Dorsolateral prefrontal cortex (tissue), 120 donors: ENCODE measurements at regions of chr22 and their contacts with region 1.

Region 1: GRCh38 chr22:49632199-49633009 is 195.3 kb downstream of the BRD1 start:
- DNase-seq: peak; percentile 57 to 86 (median 68)
- H3K4me3 ChIP-seq: peak overlapping the region; percentile 31 to 75 (median 58)
- H3K27ac ChIP-seq: peak overlapping the region in 42 of 59 donors; percentile 4 to 88 (median 49)
- H3K27me3 ChIP-seq: no peaks in the 10 kb centered on the region
- CTCF ChIP-seq: peak; percentile 72 to 99 (median 93)

Region 2: DNA sequence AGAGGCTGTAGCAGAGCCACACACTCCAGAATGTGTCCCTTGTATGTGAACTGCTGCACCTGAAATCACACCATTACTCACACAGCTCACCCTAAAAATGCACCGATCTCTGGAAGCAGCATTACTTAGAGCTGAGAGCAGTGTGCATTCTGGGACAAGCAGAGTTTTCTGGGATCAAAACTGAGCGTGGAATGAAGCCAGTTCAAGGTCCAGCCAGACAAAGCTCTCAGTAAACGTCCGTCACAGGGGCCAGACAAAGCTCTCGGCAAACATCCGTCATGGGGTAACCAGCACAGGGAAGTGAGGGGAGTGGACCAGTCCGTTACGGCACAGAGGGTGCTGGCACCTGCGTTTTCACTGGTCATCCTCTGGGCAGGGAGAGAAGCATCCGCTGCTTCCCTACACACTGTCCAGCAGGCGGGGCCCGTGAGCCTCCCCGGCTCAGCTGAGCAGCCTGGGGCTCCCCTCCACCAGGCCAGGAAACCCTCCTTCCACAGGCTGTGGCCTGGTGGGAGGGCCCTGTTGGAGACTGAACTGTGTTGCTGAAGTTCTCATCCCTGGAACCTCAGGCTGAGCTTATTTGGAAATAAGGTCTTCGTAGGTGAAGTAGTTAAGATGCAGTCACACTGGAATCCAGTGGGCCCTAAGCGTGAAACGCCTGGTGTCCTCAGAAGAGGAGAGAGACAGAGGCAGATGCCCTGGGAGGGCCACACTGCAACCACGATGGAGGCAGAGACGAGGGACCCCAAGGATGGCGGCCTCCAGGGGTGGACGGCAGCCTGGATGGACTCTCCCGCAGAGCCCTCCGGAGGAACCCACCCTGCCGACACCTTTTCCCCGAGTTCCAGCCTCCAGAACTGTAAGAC is 688.6 kb before region 1 on chr22:
- intact Hi-C with region 1: loop called in 1 of 2 experiments (anchors 10 kb)
- DNase-seq: peak in 8 of 10 donors; percentile 49 to 76 (median 60)
- H3K4me3 ChIP-seq: peak overlapping the region in 4 of 59 donors; percentile 18 to 29 (median 20)
- H3K27ac ChIP-seq: peak overlapping the region in 58 of 59 donors; percentile 10 to 90 (median 78)
- H3K27me3 ChIP-seq: peaks cover 0 to 5% (median 0%) of the 10 kb centered on the region in 45 donors
- CTCF ChIP-seq: peak; percentile 40 to 87 (median 72)

Region 3: DNA sequence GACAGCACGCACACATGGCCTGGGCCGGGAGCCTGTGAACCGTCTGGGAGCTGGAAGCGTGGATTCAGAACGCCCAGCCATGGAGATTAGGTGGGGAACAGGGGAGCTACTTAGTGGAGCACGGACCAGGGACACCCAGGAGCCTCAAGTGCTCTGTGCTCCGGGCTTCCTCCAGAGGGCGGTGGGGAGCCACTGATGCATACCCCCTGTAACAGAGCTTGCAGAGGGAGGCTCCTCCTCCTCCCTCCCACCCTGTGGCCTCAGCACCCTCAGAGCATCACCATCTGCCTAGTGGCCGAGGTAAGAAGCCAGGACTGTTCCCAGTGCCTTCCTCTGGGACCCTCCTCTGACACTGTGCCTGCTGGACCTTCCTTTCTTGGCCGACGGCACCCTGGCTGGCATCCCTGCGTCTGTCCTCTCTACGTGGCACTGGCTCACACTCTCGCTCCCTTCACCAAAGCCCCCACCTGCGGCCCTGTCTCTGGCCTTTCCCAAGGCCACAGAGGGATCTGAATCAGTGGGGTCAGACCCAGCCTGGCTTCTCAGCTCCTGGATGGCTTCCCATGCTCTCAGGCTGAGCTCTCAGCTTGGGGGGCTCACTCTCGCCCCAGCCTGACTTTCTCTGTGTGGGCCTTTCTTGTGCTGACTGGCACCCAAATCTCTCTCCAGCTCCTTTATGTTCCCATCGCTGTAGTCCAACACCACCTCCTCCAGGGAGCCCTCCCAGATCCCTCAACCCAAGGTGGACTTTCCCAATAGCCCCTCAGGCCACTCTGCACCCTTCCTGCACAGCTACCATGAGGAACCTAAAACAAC is 585.6 kb before region 1 on chr22:
- intact Hi-C with region 1: loop called (anchors 5 to 10 kb)
- DNase-seq: peak in 9 of 10 donors; percentile 38 to 73 (median 62)
- H3K4me3 ChIP-seq: no peak overlapping the region
- H3K27ac ChIP-seq: peak overlapping the region in 6 of 59 donors; percentile 11 to 51 (median 36)
- H3K27me3 ChIP-seq: peaks cover 0 to 23% (median 0%) of the 10 kb centered on the region in 45 donors
- CTCF ChIP-seq: peak in 54 of 56 donors; percentile 12 to 74 (median 62)

Region 4: GRCh38 chr22:49305214-49305909 is 327.0 kb before region 1 on chr22:
- intact Hi-C with region 1: loop called (anchors 2 to 5 kb)
- DNase-seq: peak; percentile 57 to 90 (median 76)
- H3K4me3 ChIP-seq: peak overlapping the region in 49 of 59 donors; percentile 7 to 61 (median 38)
- H3K27ac ChIP-seq: no peak overlapping the region
- H3K27me3 ChIP-seq: peaks cover 0 to 18% (median 0%) of the 10 kb centered on the region in 45 donors
- CTCF ChIP-seq: peak; percentile 85 to 100 (median 98)

Region 5: DNA sequence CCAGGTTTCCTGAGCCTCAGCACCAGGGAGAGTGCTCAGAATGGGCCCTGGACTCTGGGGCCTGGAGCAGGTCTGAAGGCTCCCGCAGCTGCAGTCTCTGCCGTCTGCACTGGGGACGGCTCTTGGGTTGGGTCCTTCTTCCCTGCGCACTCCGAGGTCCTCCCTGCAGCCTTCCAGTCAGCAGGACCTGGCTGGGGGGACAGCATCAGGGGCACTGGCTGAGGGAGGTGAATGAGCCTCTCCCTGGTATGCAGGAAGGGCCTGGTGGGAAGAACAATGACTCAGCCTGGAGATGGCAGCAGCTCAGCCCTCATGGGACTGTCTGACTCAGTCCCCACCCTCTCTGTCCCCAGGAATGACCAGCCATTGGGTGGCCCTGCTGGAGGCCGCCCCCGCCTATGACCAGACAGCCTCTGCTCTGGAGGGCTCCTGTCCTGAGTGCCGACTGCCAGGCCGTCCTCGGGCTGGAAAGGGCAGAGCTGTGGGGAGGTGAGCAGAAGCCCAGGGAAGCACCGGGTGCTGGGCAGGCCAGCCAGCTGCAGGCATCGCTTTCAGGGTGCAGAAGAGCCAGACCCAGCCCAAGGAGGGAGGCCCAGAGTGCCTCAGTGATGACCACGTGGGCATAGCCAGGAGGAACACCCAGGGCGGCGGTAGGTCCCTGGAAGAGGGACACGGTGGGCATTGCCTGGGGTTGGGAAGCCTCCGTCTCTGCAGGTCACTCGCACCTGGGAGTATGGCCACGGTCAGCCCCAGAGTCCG is 259.7 kb before region 1 on chr22:
- intact Hi-C with region 1: loop called in 1 of 2 experiments (anchors 2 kb)
- DNase-seq: peak in 8 of 10 donors; percentile 2 to 74 (median 24)
- H3K4me3 ChIP-seq: no peak overlapping the region
- H3K27ac ChIP-seq: peak overlapping the region in 1 of 59 donors; percentile 41
- H3K27me3 ChIP-seq: peaks cover 0 to 20% (median 0%) of the 10 kb centered on the region in 45 donors
- CTCF ChIP-seq: peak in 17 of 56 donors; percentile 1 to 61 (median 26)

Region 6: GRCh38 chr22:49532869-49533765 is 99.3 kb before region 1 on chr22:
- intact Hi-C with region 1: loop called in 1 of 2 experiments (anchors 5 kb)
- DNase-seq: peak in 2 of 10 donors; percentile 14 to 20
- H3K4me3 ChIP-seq: no peak overlapping the region
- H3K27ac ChIP-seq: no peak overlapping the region
- H3K27me3 ChIP-seq: no peaks in the 10 kb centered on the region
- CTCF ChIP-seq: no peak

Region 7: DNA sequence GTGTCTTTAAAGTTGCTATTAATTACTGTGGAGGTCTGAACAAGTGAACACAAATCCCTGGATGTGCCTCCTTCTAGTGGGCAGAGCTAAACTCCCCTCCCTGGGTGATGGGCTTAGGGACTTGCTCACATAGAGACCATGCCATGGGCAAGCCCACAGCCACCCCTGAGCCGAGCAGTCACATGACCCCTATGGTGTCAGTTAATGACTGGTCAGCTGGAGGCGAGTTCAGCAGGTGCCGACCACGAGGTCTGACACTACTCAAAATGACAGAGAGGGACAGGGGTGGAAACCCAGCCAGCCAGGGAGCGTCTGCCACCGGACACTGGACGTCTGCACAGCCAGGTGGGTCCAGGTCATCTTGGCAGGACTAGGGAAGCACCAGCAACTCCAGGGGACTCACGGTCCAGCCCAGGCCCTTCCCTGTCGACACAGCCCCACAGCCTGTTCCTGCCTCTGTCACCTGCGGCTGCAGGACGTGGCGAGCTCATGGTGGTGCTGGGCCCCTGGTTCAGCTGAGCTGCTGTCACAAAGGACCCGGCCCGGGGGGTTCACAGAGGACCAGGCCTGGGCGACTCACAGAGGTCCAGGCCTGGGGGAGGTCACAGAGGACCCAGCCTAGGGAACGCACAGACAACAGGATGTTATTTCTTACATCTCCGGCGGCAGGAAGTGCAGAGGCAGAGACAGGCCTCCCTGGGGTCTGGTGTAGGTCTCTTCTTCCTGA is 60.3 kb after region 1 on chr22:
- intact Hi-C with region 1: no loop called
- DNase-seq: peak in 1 of 10 donors; percentile 8
- H3K4me3 ChIP-seq: no peak overlapping the region
- H3K27ac ChIP-seq: no peak overlapping the region
- H3K27me3 ChIP-seq: peaks cover 0 to 26% (median 7%) of the 10 kb centered on the region in 45 donors
- CTCF ChIP-seq: no peak

Region 8: DNA sequence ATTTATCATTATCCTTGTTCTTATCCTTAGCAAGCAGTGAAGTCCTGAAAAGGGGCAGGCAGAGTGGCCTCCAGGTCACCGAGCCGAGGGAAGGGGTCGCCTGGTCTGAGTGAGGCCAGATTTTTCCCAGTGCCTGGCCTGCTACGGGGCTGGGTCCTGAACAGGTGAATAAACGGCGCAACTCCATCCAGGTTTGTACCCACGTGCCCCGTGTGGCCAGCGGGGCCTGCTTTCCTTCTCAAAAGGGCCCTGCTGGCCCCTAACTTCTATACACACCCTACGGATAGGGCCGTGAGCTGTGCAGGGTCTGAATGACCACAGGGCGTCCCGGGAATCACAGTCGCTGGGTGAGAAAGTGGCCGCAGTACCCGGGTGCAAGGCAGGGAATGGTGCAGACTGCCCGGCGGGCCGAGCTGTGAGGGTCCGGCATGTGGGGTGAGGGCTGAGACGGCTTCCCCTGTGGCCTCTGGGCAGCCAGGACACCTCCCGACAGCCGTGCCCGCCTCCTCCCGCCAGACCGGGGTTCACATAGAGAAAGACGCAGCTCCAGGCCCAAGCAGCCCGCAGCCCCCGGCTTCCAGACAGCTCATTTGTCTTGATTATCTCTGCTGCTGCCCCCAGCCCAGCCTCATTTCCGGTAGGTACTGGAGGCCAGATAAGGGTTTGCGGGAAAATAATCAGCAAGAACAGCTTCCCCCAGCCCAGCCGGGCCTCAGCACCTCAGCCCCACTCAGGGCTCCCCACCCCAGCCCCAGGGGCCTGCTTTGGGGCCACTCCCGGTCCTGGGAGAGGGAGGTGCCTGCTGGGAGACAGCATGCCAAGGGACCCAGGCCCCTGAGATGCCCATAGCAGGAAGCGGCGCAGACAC is 71.9 kb after region 1 on chr22:
- intact Hi-C with region 1: no loop called
- DNase-seq: peak in 1 of 10 donors; percentile 22
- H3K4me3 ChIP-seq: no peak overlapping the region
- H3K27ac ChIP-seq: no peak overlapping the region
- H3K27me3 ChIP-seq: peaks cover 0 to 37% (median 14%) of the 10 kb centered on the region in 45 donors
- CTCF ChIP-seq: no peak

Region 9: GRCh38 chr22:49788504-49788903 is 156.1 kb after region 1 on chr22:
- intact Hi-C with region 1: no loop called
- DNase-seq: no peak
- H3K4me3 ChIP-seq: no peak overlapping the region
- H3K27ac ChIP-seq: peak overlapping the region in 8 of 59 donors; percentile 2 to 43 (median 25)
- H3K27me3 ChIP-seq: no peaks in the 10 kb centered on the region
- CTCF ChIP-seq: no peak